ENCODE measurements at regions of chr6 and their contacts with region 1.

Region 1: GRCh38 chr6:167141667-167142432 is 15.9 kb downstream of the GPR31 start:
- DNase-seq: no peak
- H3K4me3 ChIP-seq: no peak overlapping the region
- H3K27ac ChIP-seq: no peak overlapping the region
- H3K4me1 ChIP-seq: peaks cover 0 to 13% (median 4%) of the 10 kb centered on the region in 4 donors
- H3K27me3 ChIP-seq: no peaks in the 10 kb centered on the region
- CTCF ChIP-seq: peak; percentile 71 to 85 (median 79)
- EP300 ChIP-seq: no peak
- POLR2A ChIP-seq: no peak

Region 2: DNA sequence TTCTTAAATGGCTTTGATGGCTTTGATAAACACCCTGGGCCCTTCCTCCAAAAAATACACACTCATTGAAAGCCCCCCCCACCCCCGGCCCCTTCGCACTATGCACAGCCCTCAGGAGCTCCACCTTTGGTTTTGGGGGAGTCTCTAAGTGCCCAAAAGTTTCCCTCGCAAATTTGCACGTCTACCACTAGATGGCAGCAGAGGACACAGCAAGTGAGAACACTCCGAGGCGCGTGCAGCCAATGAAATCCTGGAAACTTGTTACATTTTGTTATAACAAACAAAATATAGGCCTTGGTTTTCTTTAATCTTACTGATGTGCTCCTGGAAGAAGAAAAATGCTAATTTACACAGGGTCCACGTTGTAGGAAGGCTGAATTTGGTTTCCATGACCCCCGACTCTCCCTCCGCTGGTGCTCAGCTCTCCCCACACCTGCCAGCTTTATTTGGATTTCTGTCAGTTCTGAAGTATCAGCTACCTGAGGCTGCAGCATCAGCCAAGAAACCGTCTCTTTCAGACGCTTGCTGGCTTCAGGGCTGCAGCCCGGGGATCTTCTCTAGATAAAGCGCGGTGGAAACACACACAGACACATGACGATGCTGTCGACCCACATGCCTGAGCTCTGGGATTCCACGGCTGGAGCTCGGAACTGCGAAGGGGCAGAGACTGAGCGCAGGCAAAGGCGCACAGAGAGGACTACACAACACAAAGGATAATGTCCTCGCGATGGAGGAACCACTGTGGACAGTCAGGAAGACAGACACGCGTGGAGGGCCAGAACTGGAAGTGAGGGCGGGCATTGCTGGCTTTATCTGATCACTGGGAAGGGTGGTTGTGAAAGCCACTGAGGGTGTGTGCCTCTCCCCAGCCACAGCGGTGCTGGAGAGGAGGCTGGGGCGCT is 366.4 kb before region 1 on chr6:
- intact Hi-C with region 1: loop called (anchors 5 kb)
- DNase-seq: no peak
- H3K4me3 ChIP-seq: peak overlapping the region in 1 of 4 donors; percentile 18
- H3K27ac ChIP-seq: no peak overlapping the region
- H3K4me1 ChIP-seq: no peaks in the 10 kb centered on the region
- H3K27me3 ChIP-seq: no peaks in the 10 kb centered on the region
- CTCF ChIP-seq: peak; percentile 25 to 88 (median 61)
- EP300 ChIP-seq: no peak
- POLR2A ChIP-seq: no peak